CD4-positive, alpha-beta memory T cell (primary cell): ENCODE measurements at regions of chr1 and their contacts with region 1.

Region 1: DNA sequence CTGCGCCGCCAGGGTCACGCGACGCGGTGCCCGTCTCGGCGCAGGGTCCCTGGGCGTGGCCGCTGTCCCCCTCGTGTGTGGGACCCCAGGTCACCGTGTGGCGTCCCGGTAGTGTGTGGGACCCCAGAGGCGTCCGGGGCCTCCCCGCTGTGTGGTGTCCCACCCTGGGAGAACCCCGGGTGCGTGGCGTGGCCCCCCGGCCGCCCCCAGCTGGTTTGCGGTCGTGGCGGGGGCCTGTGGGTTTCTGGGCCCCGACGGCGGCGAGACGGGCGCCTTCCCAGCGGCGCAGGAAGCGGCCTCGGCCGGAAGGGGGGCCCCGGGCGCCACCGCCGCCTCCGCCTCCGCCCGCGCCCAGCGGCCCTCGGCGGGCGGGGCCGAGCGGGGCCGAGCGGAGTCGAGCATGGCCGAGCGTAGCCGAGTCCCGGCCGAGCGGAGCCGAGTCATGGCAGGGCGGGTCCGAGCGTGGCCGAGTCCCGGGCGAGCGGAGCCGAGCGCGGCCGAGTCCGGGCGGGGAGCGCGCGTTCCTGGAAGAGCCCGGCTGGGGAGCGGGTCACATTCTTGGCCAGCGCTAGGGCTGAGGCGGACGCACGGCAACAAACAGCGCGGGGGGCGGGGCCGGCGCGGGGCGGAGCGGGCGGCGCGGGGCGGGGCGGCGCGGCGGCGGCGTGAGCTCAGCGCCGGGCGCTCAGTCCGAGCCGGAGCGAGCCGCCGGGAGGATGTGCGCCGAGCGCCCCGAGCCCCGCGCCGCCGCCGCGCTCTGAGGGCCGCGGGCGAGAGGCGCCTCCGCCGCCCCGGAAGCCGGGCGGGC is 569 bp upstream of the SKI start:
- DNase-seq: peak; percentile 90 to 98 (median 96)
- H3K4me3 ChIP-seq: no peak overlapping the region
- H3K4me3 Mint-ChIP-seq: peak overlapping the region in 7 of 8 donors; percentile 51 to 82 (median 67)
- H3K27ac ChIP-seq: peak overlapping the region; percentile 26
- H3K27ac Mint-ChIP-seq: peak overlapping the region in 4 of 7 donors; percentile 41 to 79 (median 59)
- H3K4me1 ChIP-seq: peaks cover 20% of the 10 kb centered on the region
- H3K4me1 Mint-ChIP-seq: peaks cover 6 to 27% (median 16%) of the 10 kb centered on the region in 4 donors
- H3K27me3 ChIP-seq: no peaks in the 10 kb centered on the region
- H3K27me3 Mint-ChIP-seq: peaks cover 0 to 4% of the 10 kb centered on the region in 2 donors

Region 2: GRCh38 chr1:1788646-1789431 is 438.7 kb before region 1 on chr1:
- CTCF ChIA-PET with region 1: no interaction called
- POLR2A ChIA-PET with region 1: no interaction called
- intact Hi-C with region 1: no loop called
- DNase-seq: no peak
- H3K4me3 ChIP-seq: no peak overlapping the region
- H3K4me3 Mint-ChIP-seq: no peak overlapping the region
- H3K27ac ChIP-seq: no peak overlapping the region
- H3K27ac Mint-ChIP-seq: peak overlapping the region in 3 of 7 donors; percentile 22 to 86 (median 65)
- H3K4me1 ChIP-seq: no peaks in the 10 kb centered on the region
- H3K4me1 Mint-ChIP-seq: peaks cover 3 to 16% (median 7%) of the 10 kb centered on the region in 4 donors
- H3K27me3 ChIP-seq: no peaks in the 10 kb centered on the region
- H3K27me3 Mint-ChIP-seq: no peaks in the 10 kb centered on the region

Region 3: GRCh38 chr1:2212542-2213491 is 14.7 kb before region 1 on chr1:
- CTCF ChIA-PET with region 1: interaction called, 3 read pairs
- POLR2A ChIA-PET with region 1: interaction called, 50 read pairs
- intact Hi-C with region 1: loop called (anchors 1 kb)
- DNase-seq: peak; percentile 56 to 73 (median 65)
- H3K4me3 ChIP-seq: peak overlapping the region in 1 of 2 donors; percentile 34
- H3K4me3 Mint-ChIP-seq: peak overlapping the region in 5 of 8 donors; percentile 13 to 60 (median 44)
- H3K27ac ChIP-seq: peak overlapping the region; percentile 4
- H3K27ac Mint-ChIP-seq: peak overlapping the region in 2 of 7 donors; percentile 29 to 53
- H3K4me1 ChIP-seq: peaks cover 15% of the 10 kb centered on the region
- H3K4me1 Mint-ChIP-seq: peaks cover 0 to 9% (median 1%) of the 10 kb centered on the region in 4 donors
- H3K27me3 ChIP-seq: no peaks in the 10 kb centered on the region
- H3K27me3 Mint-ChIP-seq: no peaks in the 10 kb centered on the region

Region 4: DNA sequence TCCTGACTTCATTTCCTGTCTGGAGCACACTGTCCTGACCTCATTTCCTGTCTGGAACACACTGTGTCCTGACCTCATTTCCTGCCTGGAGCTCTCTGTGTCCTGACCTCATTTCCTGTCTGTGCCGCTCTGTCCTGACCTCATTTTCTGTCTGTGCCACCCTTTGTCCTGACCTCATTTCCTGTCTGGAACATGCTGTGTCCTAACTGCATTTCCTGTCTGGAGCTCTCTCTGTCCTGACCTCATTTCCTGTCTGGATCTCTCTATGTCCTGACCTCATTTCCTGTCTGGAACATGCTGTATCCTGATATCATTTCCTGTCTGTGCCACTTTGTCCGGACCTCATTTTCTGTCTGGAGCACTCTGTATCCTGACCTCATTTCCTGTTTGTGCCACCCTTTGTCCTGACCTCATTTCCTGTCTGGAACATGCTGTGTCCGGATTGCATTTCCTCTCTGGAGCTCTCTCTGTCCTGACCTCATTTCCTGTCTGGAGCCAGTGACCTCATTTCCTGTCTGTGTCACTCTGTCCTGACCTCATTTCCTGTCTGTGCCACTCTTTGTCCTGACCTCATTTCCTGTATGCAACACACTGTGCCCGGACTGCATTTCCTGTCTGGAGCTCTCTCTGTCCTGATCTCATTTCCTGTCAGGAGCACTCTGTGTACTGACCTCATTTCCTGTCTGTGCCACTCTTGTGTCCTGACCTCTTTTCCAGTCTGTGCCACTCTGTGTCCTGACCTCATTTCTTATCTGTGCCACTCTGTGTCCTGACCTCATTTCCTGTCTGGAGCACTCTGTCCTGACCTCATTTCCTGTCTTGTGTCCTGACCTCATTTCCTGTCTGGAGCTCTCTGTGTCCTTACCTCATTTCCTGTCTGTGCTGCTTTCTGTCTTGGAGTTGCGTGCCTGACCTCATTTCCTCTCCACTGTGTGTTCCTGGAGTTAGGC is 28.1 kb after region 1 on chr1:
- CTCF ChIA-PET with region 1: interaction called, 8 read pairs
- POLR2A ChIA-PET with region 1: interaction called, 454 read pairs
- intact Hi-C with region 1: no loop called
- DNase-seq: peak; percentile 87 to 96 (median 92)
- H3K4me3 ChIP-seq: no peak overlapping the region
- H3K4me3 Mint-ChIP-seq: no peak overlapping the region
- H3K27ac ChIP-seq: peak overlapping the region; percentile 95
- H3K27ac Mint-ChIP-seq: no peak overlapping the region
- H3K4me1 ChIP-seq: peaks cover 87% of the 10 kb centered on the region
- H3K4me1 Mint-ChIP-seq: peaks cover 31 to 59% (median 40%) of the 10 kb centered on the region in 4 donors
- H3K27me3 ChIP-seq: no peaks in the 10 kb centered on the region
- H3K27me3 Mint-ChIP-seq: no peaks in the 10 kb centered on the region

Region 5: GRCh38 chr1:2300851-2301606 is 73.5 kb after region 1 on chr1:
- CTCF ChIA-PET with region 1: interaction called, 4 read pairs
- POLR2A ChIA-PET with region 1: interaction called, 111 read pairs
- intact Hi-C with region 1: no loop called
- DNase-seq: peak; percentile 96 to 99 (median 97)
- H3K4me3 ChIP-seq: peak overlapping the region; percentile 47 to 57
- H3K4me3 Mint-ChIP-seq: peak overlapping the region; percentile 77 to 92 (median 86)
- H3K27ac ChIP-seq: peak overlapping the region; percentile 96
- H3K27ac Mint-ChIP-seq: peak overlapping the region; percentile 99 to 100 (median 99)
- H3K4me1 ChIP-seq: peaks cover 67% of the 10 kb centered on the region
- H3K4me1 Mint-ChIP-seq: peaks cover 15 to 71% (median 46%) of the 10 kb centered on the region in 4 donors
- H3K27me3 ChIP-seq: no peaks in the 10 kb centered on the region
- H3K27me3 Mint-ChIP-seq: no peaks in the 10 kb centered on the region

Region 6: DNA sequence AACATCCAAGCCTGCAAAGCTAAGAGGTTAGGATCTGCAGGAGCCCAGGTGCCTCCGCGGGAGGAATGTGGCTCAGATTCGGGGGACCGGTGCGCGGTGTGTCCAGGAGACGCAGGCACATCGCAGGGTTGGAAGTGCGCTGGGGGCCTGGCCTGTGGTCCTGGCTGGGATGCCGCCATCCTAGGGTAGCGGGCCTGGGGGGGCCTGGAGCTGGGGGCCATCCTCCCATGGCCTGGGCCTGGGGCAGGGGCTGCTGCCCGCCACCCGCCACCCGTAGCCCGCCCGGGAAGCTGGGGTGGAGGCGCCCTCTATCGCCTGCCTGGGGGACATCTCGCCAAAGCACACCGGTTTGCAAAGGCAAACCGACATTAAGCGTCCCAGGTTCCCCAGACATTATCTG is 1056.3 kb after region 1 on chr1:
- CTCF ChIA-PET with region 1: no interaction called
- POLR2A ChIA-PET with region 1: no interaction called
- intact Hi-C with region 1: no loop called
- DNase-seq: no peak
- H3K4me3 ChIP-seq: no peak overlapping the region
- H3K4me3 Mint-ChIP-seq: no peak overlapping the region
- H3K27ac ChIP-seq: no peak overlapping the region
- H3K27ac Mint-ChIP-seq: no peak overlapping the region
- H3K4me1 ChIP-seq: no peaks in the 10 kb centered on the region
- H3K4me1 Mint-ChIP-seq: no peaks in the 10 kb centered on the region
- H3K27me3 ChIP-seq: no peaks in the 10 kb centered on the region
- H3K27me3 Mint-ChIP-seq: peaks cover 0 to 6% of the 10 kb centered on the region in 2 donors